CD4-positive, alpha-beta memory T cell (primary cell): ENCODE measurements at regions of chr2 and their contacts with region 1.

Region 1: GRCh38 chr2:224994242-224994823 is 47.9 kb downstream of the DOCK10 start:
- DNase-seq: no peak
- H3K4me3 ChIP-seq: no peak overlapping the region
- H3K4me3 Mint-ChIP-seq: no peak overlapping the region
- H3K27ac ChIP-seq: no peak overlapping the region
- H3K27ac Mint-ChIP-seq: peak overlapping the region in 4 of 7 donors; percentile 14 to 62 (median 50)
- H3K4me1 ChIP-seq: peaks cover 49% of the 10 kb centered on the region
- H3K4me1 Mint-ChIP-seq: peaks cover 51 to 93% (median 78%) of the 10 kb centered on the region in 4 donors
- H3K27me3 ChIP-seq: no peaks in the 10 kb centered on the region
- H3K27me3 Mint-ChIP-seq: no peaks in the 10 kb centered on the region

Region 2: GRCh38 chr2:224952936-224953657 is 41.2 kb before region 1 on chr2:
- CTCF ChIA-PET with region 1: no interaction called
- POLR2A ChIA-PET with region 1: interaction called, 4 read pairs
- intact Hi-C with region 1: loop called (anchors 5 kb)
- DNase-seq: peak; percentile 43 to 60 (median 51)
- H3K4me3 ChIP-seq: no peak overlapping the region
- H3K4me3 Mint-ChIP-seq: peak overlapping the region in 7 of 8 donors; percentile 35 to 75 (median 63)
- H3K27ac ChIP-seq: peak overlapping the region; percentile 11
- H3K27ac Mint-ChIP-seq: peak overlapping the region; percentile 65 to 88 (median 77)
- H3K4me1 ChIP-seq: peaks cover 88% of the 10 kb centered on the region
- H3K4me1 Mint-ChIP-seq: peaks cover 61 to 95% (median 76%) of the 10 kb centered on the region in 4 donors
- H3K27me3 ChIP-seq: no peaks in the 10 kb centered on the region
- H3K27me3 Mint-ChIP-seq: no peaks in the 10 kb centered on the region